HEK293 (cell line): ENCODE measurements at regions of chr6 and their contacts with region 1.

Region 1: DNA sequence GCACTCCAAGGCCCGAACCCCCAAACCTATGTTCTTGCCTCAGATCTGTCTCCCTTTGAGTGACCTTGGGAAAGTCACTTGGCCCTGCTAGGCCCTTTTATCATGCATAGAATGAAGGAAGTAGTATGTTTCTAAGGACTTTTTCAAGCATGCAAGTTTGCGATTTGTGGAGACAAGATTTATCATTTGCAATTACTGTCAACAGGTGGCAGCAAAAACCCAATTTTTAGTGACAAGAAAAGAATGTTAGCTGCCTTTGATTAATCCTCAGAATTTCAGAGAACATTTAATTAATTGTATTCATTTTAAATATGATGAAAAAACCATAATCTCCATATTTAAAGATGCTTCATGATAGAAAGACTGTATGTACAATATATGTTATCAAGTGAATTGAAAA is 28.3 kb upstream of the PREP start:
- H3K4me3 ChIP-seq: no peak overlapping the region
- H3K27ac ChIP-seq: no peak overlapping the region
- H3K4me1 ChIP-seq: no peaks in the 10 kb centered on the region
- CTCF ChIP-seq: no peak

Region 2: DNA sequence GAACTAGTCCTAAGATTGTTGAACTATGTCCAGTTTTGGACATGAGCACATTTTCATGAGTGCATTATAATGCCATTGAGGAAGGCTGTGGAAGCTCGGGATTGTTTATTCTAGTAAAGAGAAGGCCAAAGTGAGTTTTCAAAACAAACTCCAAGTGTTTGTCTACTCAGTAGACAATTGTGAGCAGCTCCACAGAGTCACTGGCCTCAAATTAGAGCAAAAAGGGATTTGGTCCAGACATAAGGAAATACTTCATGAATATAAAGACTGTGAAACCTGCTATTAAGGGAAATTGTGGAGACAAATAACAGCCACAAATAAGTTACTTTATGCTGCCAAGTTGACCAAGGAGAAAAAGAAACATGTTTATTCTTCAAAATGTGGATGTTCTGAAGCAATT is 14.3 kb after region 1 on chr6:
- CTCF ChIA-PET with region 1: interaction called, 11 read pairs
- POLR2A ChIA-PET with region 1: no interaction called
- H3K4me3 ChIP-seq: no peak overlapping the region
- H3K27ac ChIP-seq: no peak overlapping the region
- H3K4me1 ChIP-seq: no peaks in the 10 kb centered on the region
- CTCF ChIP-seq: no peak

Region 3: DNA sequence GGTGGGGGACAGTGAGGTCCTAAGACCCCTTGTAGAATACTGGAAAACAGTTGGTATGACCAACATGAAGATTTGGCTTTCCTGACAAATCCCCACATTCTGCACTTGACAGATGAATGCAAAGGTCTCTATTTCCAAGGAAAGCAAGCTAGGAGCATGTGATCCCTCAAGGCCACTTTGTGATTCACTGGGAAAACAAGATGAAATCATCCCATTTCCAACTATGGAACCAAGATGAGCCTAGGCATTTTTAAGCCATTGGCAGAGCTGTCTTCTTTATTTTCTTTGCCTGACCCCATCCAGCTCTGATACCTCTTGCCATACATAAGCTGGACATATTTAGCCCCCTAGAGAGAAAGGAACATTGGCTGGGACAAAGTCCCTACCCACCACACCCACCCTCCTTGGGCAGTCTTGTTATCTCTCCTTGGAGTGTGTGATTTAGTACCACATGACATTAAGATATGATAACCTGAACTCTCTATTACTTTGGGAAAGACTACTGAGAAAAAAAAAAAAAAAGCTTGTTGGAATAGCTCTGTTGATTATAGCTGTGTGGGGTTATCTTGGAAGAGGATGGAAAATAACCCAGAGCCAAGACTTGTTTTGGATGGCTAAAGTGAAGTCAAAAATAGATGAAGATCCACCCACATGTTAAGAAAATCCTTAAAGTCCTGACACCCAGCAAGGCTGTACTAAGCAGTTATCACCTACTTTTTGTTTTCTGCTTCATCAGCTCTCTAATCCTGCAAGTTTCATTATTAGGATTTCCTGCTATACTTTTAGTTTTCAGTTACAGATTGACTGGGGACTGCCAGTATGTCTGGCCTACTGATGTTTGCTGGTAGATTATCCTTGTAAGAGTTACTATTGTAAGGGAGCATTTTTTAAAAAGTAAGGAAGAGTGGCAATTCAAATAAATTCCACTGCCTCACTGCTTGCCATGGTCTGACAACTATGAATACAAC is 61.8 kb after region 1 on chr6:
- CTCF ChIA-PET with region 1: interaction called, 11 read pairs
- POLR2A ChIA-PET with region 1: no interaction called
- H3K4me3 ChIP-seq: no peak overlapping the region
- H3K27ac ChIP-seq: no peak overlapping the region
- H3K4me1 ChIP-seq: no peaks in the 10 kb centered on the region
- CTCF ChIP-seq: no peak

Region 4: GRCh38 chr6:106085984-106086813 is 655.0 kb after region 1 on chr6 and contains the start of gene PRDM1:
- CTCF ChIA-PET with region 1: interaction called, 11 read pairs
- POLR2A ChIA-PET with region 1: interaction called, 6 read pairs
- H3K4me3 ChIP-seq: peak within 1 kb of the TSS; percentile 52
- H3K27ac ChIP-seq: peak within 1 kb of the TSS; percentile 21; the same call in 1 of the 2 replicates
- H3K4me1 ChIP-seq: peaks cover 8% of the 10 kb centered on the region
- CTCF ChIP-seq: peak; percentile 75

Region 5: GRCh38 chr6:106300944-106301343 is 869.7 kb after region 1 on chr6:
- CTCF ChIA-PET with region 1: interaction called, 19 read pairs
- POLR2A ChIA-PET with region 1: no interaction called
- H3K4me3 ChIP-seq: no peak overlapping the region
- H3K27ac ChIP-seq: no peak overlapping the region
- H3K4me1 ChIP-seq: no peaks in the 10 kb centered on the region
- CTCF ChIP-seq: no peak